GM12878 (cell line): ENCODE measurements at regions of chr9 and their contacts with region 1.

Region 1: GRCh38 chr9:37119907-37120842 is at the start of gene ZCCHC7:
- DNase-seq: peak; percentile 89
- ATAC-seq: peak; percentile 94
- H3K4me3 ChIP-seq: peak within 1 kb of the TSS; percentile 93
- H3K27ac ChIP-seq: peak within 1 kb of the TSS; percentile 93
- H3K4me1 ChIP-seq: peaks cover 8% of the 10 kb centered on the region
- H3K27me3 ChIP-seq: no peaks in the 10 kb centered on the region
- CTCF ChIP-seq: no peak
- EP300 ChIP-seq: no peak
- POLR2A ChIP-seq: peak; percentile 92
- RAD21 ChIP-seq: no peak
- polyA plus RNA-seq, gene ZCCHC7: 58.6 to 60.8 TPM

Region 2: GRCh38 chr9:37079370-37080164 is 40.6 kb before region 1 on chr9:
- CTCF ChIA-PET with region 1: interaction called, 5 read pairs
- POLR2A ChIA-PET with region 1: interaction called, 14 read pairs
- RAD21 ChIA-PET with region 1: interaction called, 64 read pairs
- SMC1A ChIA-PET with region 1: interaction called, 24 read pairs
- in situ Hi-C with region 1: no loop called
- intact Hi-C with region 1: loop called (anchors 5 kb)
- DNase-seq: peak; percentile 93
- ATAC-seq: peak; percentile 93
- H3K4me3 ChIP-seq: peak overlapping the region; percentile 84
- H3K27ac ChIP-seq: peak overlapping the region; percentile 87
- H3K4me1 ChIP-seq: peaks cover 20% of the 10 kb centered on the region
- H3K27me3 ChIP-seq: no peaks in the 10 kb centered on the region
- CTCF ChIP-seq: no peak
- EP300 ChIP-seq: no peak
- POLR2A ChIP-seq: peak; percentile 89
- RAD21 ChIP-seq: no peak

Region 3: GRCh38 chr9:37085233-37085632 is 34.9 kb before region 1 on chr9:
- CTCF ChIA-PET with region 1: interaction called, 5 read pairs
- POLR2A ChIA-PET with region 1: interaction called, 14 read pairs
- RAD21 ChIA-PET with region 1: interaction called, 64 read pairs
- SMC1A ChIA-PET with region 1: interaction called, 24 read pairs
- in situ Hi-C with region 1: no loop called
- intact Hi-C with region 1: loop called (anchors 5 kb)
- DNase-seq: no peak
- ATAC-seq: no peak; the same call in 2 of the 3 replicates
- H3K4me3 ChIP-seq: peak overlapping the region; percentile 14
- H3K27ac ChIP-seq: no peak overlapping the region
- H3K4me1 ChIP-seq: peaks cover 7% of the 10 kb centered on the region; the same call in 1 of the 2 replicates
- H3K27me3 ChIP-seq: no peaks in the 10 kb centered on the region
- CTCF ChIP-seq: no peak
- EP300 ChIP-seq: no peak
- POLR2A ChIP-seq: no peak
- RAD21 ChIP-seq: no peak

Region 4: DNA sequence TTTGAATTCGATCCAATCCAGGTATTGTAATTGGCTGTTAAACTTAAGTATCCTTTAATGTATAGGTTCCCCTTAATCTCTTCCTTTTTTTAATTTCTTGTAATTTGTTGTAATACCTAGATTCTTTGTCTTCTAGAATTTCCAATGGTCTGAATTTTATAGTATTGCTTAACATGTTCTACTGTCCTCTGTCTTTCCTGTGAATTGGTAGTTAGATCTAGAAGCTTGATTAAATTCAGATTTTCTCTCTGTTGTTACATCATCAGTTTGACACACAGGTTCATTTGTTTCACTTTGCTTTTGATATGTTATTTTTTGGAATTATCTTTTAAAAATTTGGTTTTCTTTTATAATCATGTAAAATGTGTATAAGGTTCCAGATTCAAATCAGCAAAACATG is 14.0 kb after region 1 on chr9:
- CTCF ChIA-PET with region 1: interaction called, 10 read pairs
- POLR2A ChIA-PET with region 1: interaction called, 50 read pairs
- RAD21 ChIA-PET with region 1: interaction called, 76 read pairs
- SMC1A ChIA-PET with region 1: interaction called, 99 read pairs
- in situ Hi-C with region 1: no loop called
- intact Hi-C with region 1: no loop called
- DNase-seq: no peak
- ATAC-seq: no peak
- H3K4me3 ChIP-seq: no peak overlapping the region
- H3K27ac ChIP-seq: no peak overlapping the region
- H3K4me1 ChIP-seq: peaks cover 11% of the 10 kb centered on the region; the same call in 1 of the 2 replicates
- H3K27me3 ChIP-seq: no peaks in the 10 kb centered on the region
- CTCF ChIP-seq: no peak
- EP300 ChIP-seq: no peak
- POLR2A ChIP-seq: no peak
- RAD21 ChIP-seq: no peak